ENCODE measurements at regions of chrX and their contacts with region 1.

Region 1: DNA sequence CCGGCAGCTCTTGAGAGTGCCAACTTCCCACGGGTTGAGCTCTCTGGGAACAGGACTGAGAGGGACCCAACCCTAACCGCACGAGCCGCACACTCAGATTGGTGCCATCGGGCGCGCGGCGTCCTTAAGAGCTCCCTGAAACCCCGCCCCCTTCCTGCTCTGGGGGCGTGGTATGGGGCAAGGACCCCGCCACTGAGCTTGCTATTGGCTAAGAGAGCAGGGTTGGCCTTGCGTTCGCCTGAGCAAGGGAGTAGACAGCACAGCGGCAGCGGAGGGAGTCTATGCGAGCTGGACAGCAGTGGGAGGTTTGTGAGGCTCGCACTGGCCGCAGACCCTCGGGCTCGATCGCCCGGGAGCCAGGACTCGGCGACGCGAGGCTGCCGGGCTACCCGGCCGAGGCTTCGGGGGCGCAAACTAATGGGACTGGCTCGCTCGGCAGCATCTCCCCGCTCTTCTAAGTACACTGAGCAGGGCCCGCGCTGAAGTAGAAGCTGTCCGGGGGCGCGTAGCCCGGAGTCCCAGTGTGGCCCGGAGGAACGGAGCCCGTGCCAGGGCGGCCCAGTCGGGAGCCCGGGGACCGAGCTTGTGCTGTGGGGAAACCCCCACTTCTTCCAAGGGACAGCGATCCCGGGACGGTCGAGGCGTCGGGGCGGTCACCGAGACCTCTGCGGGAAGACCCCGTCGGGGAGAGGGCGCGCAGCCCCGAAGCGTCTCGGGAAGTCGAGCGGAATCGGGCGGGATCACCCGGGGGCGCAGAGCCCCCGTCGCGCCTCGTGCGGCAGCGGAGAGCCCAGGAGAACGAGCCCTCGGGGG is at the start of gene EFNB1:
- DNase-seq: peak; percentile 86 to 90 (median 87)
- H3K4me3 ChIP-seq: peak within 1 kb of the TSS; percentile 42 to 79
- H3K4me3 Mint-ChIP-seq: peak within 1 kb of the TSS; percentile 93 to 99 (median 95)
- H3K27ac ChIP-seq: peak within 1 kb of the TSS; percentile 21
- H3K27ac Mint-ChIP-seq: peak within 1 kb of the TSS; percentile 85 to 93 (median 91)
- H3K4me1 ChIP-seq: peaks cover 20% of the 10 kb centered on the region
- H3K4me1 Mint-ChIP-seq: peaks cover 10 to 27% (median 18%) of the 10 kb centered on the region in 4 donors
- H3K27me3 ChIP-seq: no peaks in the 10 kb centered on the region
- H3K27me3 Mint-ChIP-seq: peaks cover 0 to 1% of the 10 kb centered on the region in 2 donors
- total RNA-seq, gene EFNB1: 4.5 to 4.9 TPM

Region 2: GRCh38 chrX:68498508-68499379 is 330.2 kb before region 1 on chrX and contains the start of gene YIPF6:
- CTCF ChIA-PET with region 1: interaction called, 3 read pairs
- POLR2A ChIA-PET with region 1: interaction called, 4 read pairs
- intact Hi-C with region 1: loop called (anchors 2 kb)
- DNase-seq: peak; percentile 52 to 64 (median 63)
- H3K4me3 ChIP-seq: peak within 1 kb of the TSS; percentile 49 to 72
- H3K4me3 Mint-ChIP-seq: peak within 1 kb of the TSS; percentile 91 to 98 (median 94)
- H3K27ac ChIP-seq: peak within 1 kb of the TSS; percentile 90
- H3K27ac Mint-ChIP-seq: peak within 1 kb of the TSS; percentile 96 to 99 (median 98)
- H3K4me1 ChIP-seq: peaks cover 30% of the 10 kb centered on the region
- H3K4me1 Mint-ChIP-seq: peaks cover 6 to 53% (median 30%) of the 10 kb centered on the region in 4 donors
- H3K27me3 ChIP-seq: no peaks in the 10 kb centered on the region
- H3K27me3 Mint-ChIP-seq: peaks cover 0 to 7% of the 10 kb centered on the region in 2 donors
- total RNA-seq, gene YIPF6: 17.1 to 18.9 TPM

Region 3: GRCh38 chrX:68710870-68711576 is 117.9 kb before region 1 on chrX:
- CTCF ChIA-PET with region 1: no interaction called
- POLR2A ChIA-PET with region 1: no interaction called
- intact Hi-C with region 1: no loop called
- DNase-seq: no peak
- H3K4me3 ChIP-seq: no peak overlapping the region
- H3K4me3 Mint-ChIP-seq: no peak overlapping the region
- H3K27ac ChIP-seq: no peak overlapping the region
- H3K27ac Mint-ChIP-seq: no peak overlapping the region
- H3K4me1 ChIP-seq: no peaks in the 10 kb centered on the region
- H3K4me1 Mint-ChIP-seq: no peaks in the 10 kb centered on the region
- H3K27me3 ChIP-seq: no peaks in the 10 kb centered on the region
- H3K27me3 Mint-ChIP-seq: no peaks in the 10 kb centered on the region

Region 4: GRCh38 chrX:68853665-68854251 is 24.8 kb after region 1 on chrX:
- CTCF ChIA-PET with region 1: no interaction called
- POLR2A ChIA-PET with region 1: no interaction called
- intact Hi-C with region 1: no loop called
- DNase-seq: no peak
- H3K4me3 ChIP-seq: no peak overlapping the region
- H3K4me3 Mint-ChIP-seq: no peak overlapping the region
- H3K27ac ChIP-seq: no peak overlapping the region
- H3K27ac Mint-ChIP-seq: no peak overlapping the region
- H3K4me1 ChIP-seq: no peaks in the 10 kb centered on the region
- H3K4me1 Mint-ChIP-seq: no peaks in the 10 kb centered on the region
- H3K27me3 ChIP-seq: no peaks in the 10 kb centered on the region
- H3K27me3 Mint-ChIP-seq: peaks cover 0 to 1% of the 10 kb centered on the region in 2 donors

Region 5: GRCh38 chrX:69222103-69223090 is 393.5 kb after region 1 on chrX:
- CTCF ChIA-PET with region 1: interaction called, 135 read pairs
- POLR2A ChIA-PET with region 1: interaction called, 6 read pairs
- intact Hi-C with region 1: loop called (anchors 1 kb)
- DNase-seq: peak; percentile 60 to 69 (median 66)
- H3K4me3 ChIP-seq: no peak overlapping the region
- H3K4me3 Mint-ChIP-seq: no peak overlapping the region
- H3K27ac ChIP-seq: no peak overlapping the region
- H3K27ac Mint-ChIP-seq: no peak overlapping the region
- H3K4me1 ChIP-seq: no peaks in the 10 kb centered on the region
- H3K4me1 Mint-ChIP-seq: no peaks in the 10 kb centered on the region
- H3K27me3 ChIP-seq: no peaks in the 10 kb centered on the region
- H3K27me3 Mint-ChIP-seq: peaks cover 0 to 1% of the 10 kb centered on the region in 2 donors

Region 6: GRCh38 chrX:69387567-69388487 is 558.9 kb after region 1 on chrX:
- CTCF ChIA-PET with region 1: interaction called, 8 read pairs
- POLR2A ChIA-PET with region 1: no interaction called
- intact Hi-C with region 1: loop called (anchors 2 kb)
- DNase-seq: peak; percentile 6 to 27 (median 15)
- H3K4me3 ChIP-seq: no peak overlapping the region
- H3K4me3 Mint-ChIP-seq: no peak overlapping the region
- H3K27ac ChIP-seq: no peak overlapping the region
- H3K27ac Mint-ChIP-seq: peak overlapping the region in 1 of 7 donors; percentile 25
- H3K4me1 ChIP-seq: no peaks in the 10 kb centered on the region
- H3K4me1 Mint-ChIP-seq: peaks cover 0 to 3% (median 0%) of the 10 kb centered on the region in 4 donors
- H3K27me3 ChIP-seq: no peaks in the 10 kb centered on the region
- H3K27me3 Mint-ChIP-seq: peaks cover 2 to 5% of the 10 kb centered on the region in 2 donors

Region 7: DNA sequence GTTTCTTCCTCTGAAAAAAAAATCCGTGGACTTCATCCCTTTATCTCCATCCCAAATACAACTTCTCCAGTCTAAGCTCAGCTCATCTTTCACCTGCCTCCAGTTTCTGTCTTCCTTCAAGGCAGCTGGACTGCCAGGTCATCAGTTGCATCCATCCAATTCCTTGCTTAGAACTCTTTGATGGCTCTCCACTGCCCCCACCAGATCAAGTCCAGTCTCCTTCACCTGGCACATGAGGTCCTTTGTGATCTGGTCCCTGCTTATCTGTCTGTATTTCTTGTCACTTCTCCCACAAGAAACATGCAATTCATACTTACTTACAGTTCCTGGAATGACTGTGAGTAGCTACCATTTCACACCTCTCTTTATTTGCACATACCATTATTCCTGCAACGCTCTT is 1267.1 kb after region 1 on chrX:
- CTCF ChIA-PET with region 1: interaction called, 8 read pairs
- POLR2A ChIA-PET with region 1: no interaction called
- intact Hi-C with region 1: loop called (anchors 5 kb)
- DNase-seq: no peak
- H3K4me3 ChIP-seq: no peak overlapping the region
- H3K4me3 Mint-ChIP-seq: no peak overlapping the region
- H3K27ac ChIP-seq: no peak overlapping the region
- H3K27ac Mint-ChIP-seq: no peak overlapping the region
- H3K4me1 ChIP-seq: no peaks in the 10 kb centered on the region
- H3K4me1 Mint-ChIP-seq: no peaks in the 10 kb centered on the region
- H3K27me3 ChIP-seq: no peaks in the 10 kb centered on the region
- H3K27me3 Mint-ChIP-seq: peaks cover 2 to 5% of the 10 kb centered on the region in 2 donors

Measured in CD4-positive, alpha-beta memory T cell (primary cell).